HepG2 (cell line): ENCODE measurements at regions of chr5 and their contacts with region 1.

Region 1: DNA sequence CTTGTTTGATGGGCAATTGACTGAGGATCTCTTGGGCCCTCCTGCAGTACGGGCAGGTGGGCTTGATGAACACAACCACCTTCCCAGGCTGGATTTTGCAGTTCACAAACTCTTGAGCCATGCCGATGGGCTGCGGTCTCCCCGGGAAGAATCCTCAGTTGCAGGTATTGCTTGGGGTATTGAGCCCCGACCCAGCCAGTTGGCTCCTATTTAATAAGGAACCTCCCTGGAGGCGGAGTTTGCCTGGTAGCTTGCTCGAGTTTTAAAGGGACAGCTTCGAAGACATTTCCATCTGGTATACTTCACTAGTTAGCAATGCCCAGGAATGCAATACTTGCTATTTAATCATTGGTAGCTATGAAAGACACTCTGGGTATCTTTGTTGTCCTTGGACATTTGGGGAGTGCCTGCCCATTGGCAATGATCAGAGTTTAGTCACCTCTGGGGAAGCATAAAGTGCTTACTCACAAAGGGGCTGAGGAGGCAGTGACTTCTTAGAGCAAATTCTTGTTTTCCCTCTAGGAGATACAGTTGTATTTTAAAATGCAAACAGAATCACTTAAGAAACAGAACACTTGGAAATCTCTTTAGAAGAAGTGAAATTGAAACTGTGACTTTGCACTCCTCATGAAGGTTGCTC is at the start of gene GLRX:
- DNase-seq: peak; percentile 65
- ATAC-seq: peak; percentile 63
- H3K4me3 ChIP-seq: peak within 1 kb of the TSS; percentile 66 to 86 (median 81)
- H3K27ac ChIP-seq: peak within 1 kb of the TSS; percentile 89
- H3K4me1 ChIP-seq: peaks cover 87% of the 10 kb centered on the region
- H3K27me3 ChIP-seq: no peaks in the 10 kb centered on the region; a peak in 1 of 5 replicates
- CTCF ChIP-seq: no peak
- EP300 ChIP-seq: no peak
- POLR2A ChIP-seq: peak; percentile 82 to 95
- RAD21 ChIP-seq: no peak
- total RNA-seq, gene GLRX: 63.8 and 71.9 TPM in 2 replicates

Region 2: DNA sequence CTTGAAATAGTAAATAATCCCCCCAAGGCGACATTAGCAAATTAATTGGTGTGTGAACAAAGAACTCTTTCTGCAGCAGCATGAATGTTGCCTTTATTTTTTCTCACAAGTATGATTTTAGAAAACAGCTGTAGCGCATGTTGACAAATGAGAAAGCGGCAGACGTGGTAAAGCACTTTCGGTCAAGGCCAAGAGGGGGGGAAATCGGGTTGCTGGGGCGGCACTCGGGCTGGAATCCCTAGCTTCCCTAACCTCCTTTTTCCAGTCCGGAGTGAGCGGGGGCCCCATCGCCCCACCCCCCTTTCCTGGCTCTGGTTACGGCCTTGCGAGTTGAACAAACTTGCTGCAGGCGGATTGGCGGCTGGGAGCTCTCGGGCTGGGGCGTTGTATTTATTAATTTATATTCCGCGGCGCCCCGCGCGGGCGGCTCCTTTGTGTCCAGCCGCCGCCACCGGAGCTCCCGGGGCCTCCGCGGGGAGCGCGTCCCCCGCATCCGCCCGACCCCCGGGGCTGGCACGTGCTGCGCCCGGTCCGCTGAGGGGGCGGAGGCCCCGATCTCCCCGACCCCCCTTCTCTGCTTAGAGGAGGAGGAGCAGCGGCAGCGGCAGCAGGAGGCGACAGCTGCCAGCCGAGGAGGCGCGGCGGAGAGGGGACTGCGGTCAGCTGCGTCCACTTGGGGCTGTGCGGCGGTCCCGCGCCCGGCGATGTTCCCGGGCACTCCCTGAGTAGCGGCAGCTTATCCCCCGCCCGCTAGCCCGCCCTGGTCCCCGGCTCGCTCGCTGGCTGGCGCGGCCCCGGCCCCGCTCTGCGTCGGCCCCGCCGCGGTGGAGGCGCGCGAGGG is 91.7 kb before region 1 on chr5 and contains the start of gene RHOBTB3:
- CTCF ChIA-PET with region 1: no interaction called
- POLR2A ChIA-PET with region 1: interaction called, 15 read pairs
- in situ Hi-C with region 1: no loop called
- intact Hi-C with region 1: no loop called
- DNase-seq: peak; percentile 79
- ATAC-seq: peak; percentile 87
- H3K4me3 ChIP-seq: peak within 1 kb of the TSS; percentile 80 to 93 (median 87)
- H3K27ac ChIP-seq: peak within 1 kb of the TSS; percentile 65
- H3K4me1 ChIP-seq: peaks cover 72% of the 10 kb centered on the region
- H3K27me3 ChIP-seq: no peaks in the 10 kb centered on the region
- CTCF ChIP-seq: peak; percentile 17; the same call in 1 of the 2 replicates
- EP300 ChIP-seq: peak in 1 of 2 experiments; percentile 49; a peak in 1 of 4 replicates
- POLR2A ChIP-seq: peak; percentile 41 to 44; a peak in 2 of 4 replicates
- RAD21 ChIP-seq: peak; percentile 49; the same call in 1 of the 2 replicates
- total RNA-seq, gene RHOBTB3: 35.4 and 39.6 TPM in 2 replicates

Region 3: GRCh38 chr5:95781101-95781583 is 41.5 kb before region 1 on chr5:
- CTCF ChIA-PET with region 1: interaction called, 3 read pairs
- POLR2A ChIA-PET with region 1: interaction called, 10 read pairs
- in situ Hi-C with region 1: no loop called
- intact Hi-C with region 1: no loop called
- DNase-seq: peak; percentile 73
- ATAC-seq: peak; percentile 100
- H3K4me3 ChIP-seq: no peak overlapping the region
- H3K27ac ChIP-seq: no peak overlapping the region
- H3K4me1 ChIP-seq: peaks cover 6% of the 10 kb centered on the region; the same call in 1 of the 2 replicates
- H3K27me3 ChIP-seq: no peaks in the 10 kb centered on the region
- CTCF ChIP-seq: peak; percentile 89
- EP300 ChIP-seq: no peak
- POLR2A ChIP-seq: no peak
- RAD21 ChIP-seq: peak; percentile 94

Region 4: DNA sequence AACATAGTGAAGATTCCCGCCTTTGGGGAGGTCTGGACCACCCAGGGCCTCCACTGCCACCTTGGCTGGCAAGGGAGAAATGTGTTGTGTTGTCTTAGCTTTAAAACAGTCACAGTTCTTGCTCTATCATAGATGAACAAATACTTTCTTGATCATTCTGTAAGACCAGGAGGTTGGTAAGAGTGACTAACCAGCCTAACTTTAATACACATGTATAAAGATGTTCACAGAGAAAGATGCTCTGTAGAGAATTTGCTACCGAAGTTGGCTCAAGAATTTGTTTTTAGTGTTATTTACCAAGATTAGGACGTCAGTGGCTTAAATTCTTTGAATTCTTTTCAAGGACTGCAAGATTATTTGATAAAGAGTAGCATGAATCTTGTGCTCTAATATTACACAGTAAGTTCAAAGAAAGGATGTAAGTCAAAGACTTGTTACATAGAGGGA is 28.6 kb before region 1 on chr5:
- CTCF ChIA-PET with region 1: no interaction called
- POLR2A ChIA-PET with region 1: no interaction called
- in situ Hi-C with region 1: no loop called
- intact Hi-C with region 1: no loop called
- DNase-seq: no peak
- ATAC-seq: no peak
- H3K4me3 ChIP-seq: no peak overlapping the region
- H3K27ac ChIP-seq: no peak overlapping the region
- H3K4me1 ChIP-seq: peaks cover 18% of the 10 kb centered on the region
- H3K27me3 ChIP-seq: no peaks in the 10 kb centered on the region
- CTCF ChIP-seq: no peak
- EP300 ChIP-seq: no peak
- POLR2A ChIP-seq: no peak
- RAD21 ChIP-seq: no peak

Region 5: DNA sequence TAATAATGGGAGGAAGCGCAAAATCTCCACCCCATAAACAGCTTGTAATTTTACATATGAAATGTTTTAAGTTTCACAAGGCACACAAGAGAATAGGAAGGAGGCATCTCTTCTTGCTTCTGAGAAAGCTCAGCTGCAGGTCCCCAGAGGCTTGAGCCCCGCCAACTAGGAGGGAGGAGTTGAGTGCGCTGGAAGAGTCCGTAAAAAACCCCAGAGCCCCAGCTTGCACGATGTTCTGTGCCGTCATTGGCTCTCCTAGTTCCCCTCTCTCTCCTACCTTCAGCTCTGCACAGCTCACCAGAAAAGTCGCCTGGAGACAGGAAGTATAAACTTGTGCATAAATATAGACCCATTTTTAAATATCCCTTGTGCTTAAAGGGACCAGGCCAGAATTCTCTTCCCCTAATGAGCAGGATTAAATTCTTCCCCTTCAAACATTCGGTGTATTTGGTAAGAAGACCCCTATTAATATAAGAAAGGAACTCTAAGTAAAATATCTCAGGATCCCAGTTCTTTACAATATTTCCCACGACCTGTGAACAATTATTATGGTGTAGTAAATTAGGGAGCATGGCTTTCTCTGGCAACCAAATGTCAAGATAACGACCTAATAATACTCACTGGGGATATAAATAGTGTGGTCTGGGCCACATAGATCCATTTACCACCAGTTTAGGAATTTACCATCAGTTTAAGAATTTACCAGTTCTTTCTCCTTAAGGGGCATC is 13.8 kb before region 1 on chr5:
- CTCF ChIA-PET with region 1: no interaction called
- POLR2A ChIA-PET with region 1: interaction called, 98 read pairs
- in situ Hi-C with region 1: no loop called
- intact Hi-C with region 1: no loop called
- DNase-seq: no peak
- ATAC-seq: no peak
- H3K4me3 ChIP-seq: no peak overlapping the region
- H3K27ac ChIP-seq: no peak overlapping the region
- H3K4me1 ChIP-seq: peaks cover 65% of the 10 kb centered on the region
- H3K27me3 ChIP-seq: no peaks in the 10 kb centered on the region
- CTCF ChIP-seq: no peak
- EP300 ChIP-seq: no peak
- POLR2A ChIP-seq: no peak
- RAD21 ChIP-seq: no peak

Region 6: DNA sequence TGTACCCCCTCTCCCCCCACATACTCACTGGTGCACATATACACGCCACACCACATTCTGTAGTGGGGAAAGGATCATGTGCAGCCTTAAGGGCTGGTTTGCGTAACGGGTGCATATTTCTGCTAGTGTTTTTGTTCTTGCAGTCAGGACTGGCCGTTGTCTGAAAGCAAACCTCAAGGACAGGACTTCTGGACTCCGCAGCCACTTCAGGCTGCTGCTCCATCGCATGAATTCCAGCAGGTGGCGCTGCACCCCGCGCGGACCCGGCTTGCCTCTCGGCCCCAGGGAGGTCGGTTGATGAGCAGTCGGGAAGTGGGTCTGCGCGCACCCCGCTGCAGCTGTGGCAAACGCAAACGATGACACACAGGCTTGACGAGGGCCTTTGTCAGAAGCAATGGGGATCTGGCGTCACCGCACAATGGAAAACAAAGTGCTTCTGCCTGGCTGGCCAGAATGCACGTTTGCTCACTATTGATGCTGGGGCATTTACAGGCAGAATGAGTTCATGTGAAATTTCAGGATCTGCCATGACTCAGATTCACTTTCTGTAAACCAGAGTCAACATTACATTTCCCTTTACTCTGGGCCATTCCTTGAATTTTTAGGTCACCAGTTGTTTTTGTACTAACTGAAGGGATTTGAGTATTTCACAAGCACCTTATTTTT is 36.1 kb after region 1 on chr5:
- CTCF ChIA-PET with region 1: no interaction called
- POLR2A ChIA-PET with region 1: interaction called, 18 read pairs
- in situ Hi-C with region 1: no loop called
- intact Hi-C with region 1: no loop called
- DNase-seq: peak; percentile 90
- ATAC-seq: peak; percentile 75
- H3K4me3 ChIP-seq: peak overlapping the region; percentile 10 to 47 (median 32); a peak in 4 of 6 replicates
- H3K27ac ChIP-seq: peak overlapping the region; percentile 71
- H3K4me1 ChIP-seq: peaks cover 76% of the 10 kb centered on the region
- H3K27me3 ChIP-seq: no peaks in the 10 kb centered on the region
- CTCF ChIP-seq: peak; percentile 100
- EP300 ChIP-seq: peak in 1 of 2 experiments; percentile 63; a peak in 1 of 4 replicates
- POLR2A ChIP-seq: peak; percentile 28 to 51; a peak in 2 of 4 replicates
- RAD21 ChIP-seq: peak; percentile 99

Region 7: DNA sequence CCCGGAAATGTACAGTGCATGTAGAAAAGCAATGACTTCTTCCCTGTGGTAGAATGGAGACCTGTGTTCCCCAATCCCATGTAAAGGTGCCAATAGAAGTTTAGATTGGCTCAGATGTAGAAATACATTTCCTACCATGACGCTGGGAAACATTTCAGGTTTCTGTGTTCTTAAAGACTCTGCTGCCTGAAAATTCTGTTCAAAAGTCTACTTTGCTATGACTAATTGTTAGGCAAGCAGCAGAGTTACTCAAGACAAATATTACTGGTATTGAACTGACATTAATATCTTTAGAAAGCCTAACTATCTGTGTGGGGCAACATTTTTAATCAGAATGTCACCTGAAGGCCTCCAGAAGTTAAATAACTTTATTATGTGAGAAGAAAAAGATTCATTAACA is 214.5 kb after region 1 on chr5:
- CTCF ChIA-PET with region 1: no interaction called
- POLR2A ChIA-PET with region 1: no interaction called
- in situ Hi-C with region 1: no loop called
- intact Hi-C with region 1: no loop called
- DNase-seq: peak; percentile 19
- ATAC-seq: no peak
- H3K4me3 ChIP-seq: no peak overlapping the region
- H3K27ac ChIP-seq: no peak overlapping the region
- H3K4me1 ChIP-seq: peaks cover 19% of the 10 kb centered on the region
- H3K27me3 ChIP-seq: no peaks in the 10 kb centered on the region
- CTCF ChIP-seq: no peak
- EP300 ChIP-seq: no peak
- POLR2A ChIP-seq: no peak
- RAD21 ChIP-seq: no peak